Ascending aorta (tissue), 2 donors: ENCODE measurements at regions of chr19 and their contacts with region 1.

Region 1: DNA sequence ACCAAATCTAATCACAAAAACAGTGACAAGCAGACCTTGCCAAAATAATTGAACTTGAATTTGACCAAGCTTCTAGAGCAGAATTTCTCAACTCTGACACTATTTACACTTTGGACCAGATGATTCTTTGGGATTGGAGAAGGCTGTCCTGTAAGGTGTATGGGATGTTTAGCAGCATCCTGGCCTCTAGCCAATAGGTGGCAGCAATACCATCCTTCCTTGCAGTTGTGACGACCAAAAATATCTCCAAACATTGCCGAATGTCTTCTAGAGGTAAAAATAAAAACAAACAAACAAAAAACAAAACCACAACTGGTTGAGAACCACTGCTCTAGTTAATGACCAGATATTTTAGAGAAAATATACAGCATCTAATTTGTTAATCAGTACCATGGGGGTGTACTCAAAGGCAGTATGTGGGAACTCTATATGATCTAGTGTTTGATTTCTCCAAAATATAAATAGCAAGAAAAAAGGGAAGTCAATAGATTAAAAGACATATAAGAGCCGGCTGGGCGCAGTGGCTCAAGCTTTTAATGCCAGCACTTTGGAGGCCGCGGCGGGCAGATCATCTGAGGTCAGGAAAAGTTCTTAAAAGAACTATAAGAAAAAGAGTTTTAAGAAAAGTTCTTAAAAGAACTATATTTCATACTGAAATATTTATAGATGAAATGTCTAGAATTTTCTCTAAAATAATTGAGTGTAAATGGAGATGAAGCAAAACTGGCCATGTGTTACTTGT is 60.9 kb upstream of the ZNF527 start:
- DNase-seq: no peak
- H3K4me3 ChIP-seq: no peak overlapping the region
- H3K27ac ChIP-seq: no peak overlapping the region
- H3K4me1 ChIP-seq: no peaks in the 10 kb centered on the region
- H3K27me3 ChIP-seq: no peaks in the 10 kb centered on the region
- CTCF ChIP-seq: no peak

Region 2: DNA sequence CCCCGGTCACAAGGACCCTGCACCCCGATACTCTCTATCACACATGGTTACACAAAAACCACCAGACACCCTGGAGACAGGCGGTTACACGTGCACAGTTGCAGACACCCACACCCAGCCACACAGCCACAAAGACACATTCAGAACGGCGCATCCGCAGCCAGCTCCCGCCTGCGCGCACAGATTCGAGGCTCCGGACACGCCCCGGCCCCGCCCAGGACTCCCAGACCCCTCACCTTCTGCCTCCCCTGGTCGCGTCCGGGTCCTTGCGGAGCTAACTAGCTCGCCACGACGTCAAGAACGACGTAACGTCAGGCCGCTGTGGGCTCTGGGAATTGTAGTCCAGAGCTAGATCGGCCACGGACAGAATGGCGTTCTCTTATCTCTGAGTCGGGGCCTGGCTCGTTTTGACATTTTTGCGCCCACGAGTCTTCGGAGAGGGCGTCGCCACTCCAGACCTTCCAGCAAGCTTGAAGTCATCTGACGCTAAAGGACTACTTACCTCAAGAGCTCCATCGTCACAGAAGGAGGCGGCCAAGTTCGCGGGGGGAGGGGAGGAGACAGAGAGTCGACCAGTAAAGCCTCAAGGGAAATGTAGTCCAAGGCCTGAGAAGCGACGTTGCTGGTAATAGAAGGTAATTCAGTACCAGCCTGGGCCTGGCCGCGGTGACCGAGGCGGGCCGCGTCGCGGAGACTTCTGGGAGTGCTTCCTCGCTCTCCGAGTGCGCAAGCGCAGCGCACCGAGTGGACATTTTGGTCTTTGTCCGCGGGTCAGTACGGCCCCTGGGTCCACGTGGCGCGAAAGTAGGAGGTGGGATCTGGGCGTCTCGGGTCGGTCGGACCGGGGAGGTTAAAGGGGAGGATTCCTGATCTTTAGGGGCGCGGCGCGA is 1095.4 kb before region 1 on chr19 and contains the starts of genes ZNF146 and ZNF565:
- intact Hi-C with region 1: loop called (anchors 10 kb)
- DNase-seq: peak; percentile 96 to 99
- H3K4me3 ChIP-seq: peak within 1 kb of the TSS; percentile 81
- H3K27ac ChIP-seq: peak within 1 kb of the TSS; percentile 92 to 96
- H3K4me1 ChIP-seq: peaks cover 0 to 12% of the 10 kb centered on the region in 2 donors
- H3K27me3 ChIP-seq: no peaks in the 10 kb centered on the region
- CTCF ChIP-seq: no peak
- total RNA-seq, gene ZNF146: 21.2 TPM
- total RNA-seq, gene ZNF565: 1.9 TPM

Region 3: GRCh38 chr19:36915992-36916830 is 393.8 kb before region 1 on chr19 and contains the starts of genes ZNF568 and ZNF829:
- intact Hi-C with region 1: loop called (anchors 10 kb)
- DNase-seq: peak; percentile 42 to 93
- H3K4me3 ChIP-seq: peak within 1 kb of the TSS; percentile 80 to 91
- H3K27ac ChIP-seq: peak within 1 kb of the TSS; percentile 93 to 98
- H3K4me1 ChIP-seq: peaks cover 0 to 10% of the 10 kb centered on the region in 2 donors
- H3K27me3 ChIP-seq: no peaks in the 10 kb centered on the region
- CTCF ChIP-seq: peak; percentile 57 to 73 (median 59)
- total RNA-seq, gene ZNF568: 2.4 TPM
- total RNA-seq, gene ZNF829: 1.2 TPM

Region 4: DNA sequence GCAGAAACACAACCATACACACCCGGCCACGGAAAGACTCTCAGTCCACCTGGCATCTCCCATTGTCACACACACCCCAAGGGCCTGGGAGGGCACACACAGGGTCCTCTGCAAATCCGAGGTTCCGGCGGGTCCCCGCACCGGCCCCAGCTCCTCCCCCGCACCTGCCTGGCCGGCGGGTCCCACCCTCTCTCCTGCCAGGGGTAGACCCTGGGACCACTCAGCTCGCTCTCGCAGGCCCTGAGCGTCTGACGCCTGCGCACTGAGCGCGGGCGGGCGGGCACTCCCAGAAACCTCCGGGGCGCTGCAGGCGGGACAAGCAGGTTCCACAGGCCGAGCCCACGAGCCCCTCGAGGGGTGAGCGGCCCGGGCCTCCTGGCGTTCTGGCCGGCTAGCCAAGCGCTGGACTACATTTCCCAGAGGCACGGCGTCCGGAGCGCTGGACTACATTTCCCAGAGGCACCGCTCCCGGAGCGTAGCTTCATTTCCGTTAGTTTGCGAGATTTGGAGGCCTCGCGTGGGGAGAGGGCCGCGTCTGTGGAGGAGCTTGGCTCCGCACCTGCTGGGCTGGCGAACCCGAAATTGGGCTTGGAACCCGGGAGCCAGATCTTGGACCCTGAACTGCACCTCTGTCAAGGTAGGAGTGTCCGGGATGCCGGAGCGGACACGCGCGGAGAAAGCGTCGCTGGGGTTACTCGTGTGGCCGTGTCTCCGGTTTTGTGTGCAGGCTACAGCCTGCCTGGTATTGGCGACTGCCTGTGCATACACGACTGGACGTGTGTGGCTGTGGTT is 231.9 kb before region 1 on chr19 and contains the start of gene ZNF420:
- intact Hi-C with region 1: loop called (anchors 10 kb)
- DNase-seq: peak; percentile 77 to 96
- H3K4me3 ChIP-seq: peak within 1 kb of the TSS; percentile 84 to 87
- H3K27ac ChIP-seq: peak within 1 kb of the TSS; percentile 87 to 91
- H3K4me1 ChIP-seq: peaks cover 6 to 7% of the 10 kb centered on the region in 2 donors
- H3K27me3 ChIP-seq: no peaks in the 10 kb centered on the region
- CTCF ChIP-seq: no peak
- total RNA-seq, gene ZNF420: 69.9 TPM

Region 5: GRCh38 chr19:37217855-37218591 is 92.0 kb before region 1 on chr19 and contains the start of gene ZNF383:
- intact Hi-C with region 1: loop called (anchors 10 kb)
- DNase-seq: peak; percentile 47 to 91
- H3K4me3 ChIP-seq: peak within 1 kb of the TSS; percentile 60 to 73
- H3K27ac ChIP-seq: peak within 1 kb of the TSS; percentile 75 to 80
- H3K4me1 ChIP-seq: peaks cover 0 to 4% of the 10 kb centered on the region in 2 donors
- H3K27me3 ChIP-seq: no peaks in the 10 kb centered on the region
- CTCF ChIP-seq: no peak
- total RNA-seq, gene ZNF383: 6.9 TPM

Region 6: GRCh38 chr19:37342753-37343152 is 32.7 kb after region 1 on chr19:
- intact Hi-C with region 1: no loop called
- DNase-seq: no peak
- H3K4me3 ChIP-seq: no peak overlapping the region
- H3K27ac ChIP-seq: no peak overlapping the region
- H3K4me1 ChIP-seq: no peaks in the 10 kb centered on the region
- H3K27me3 ChIP-seq: no peaks in the 10 kb centered on the region
- CTCF ChIP-seq: no peak

Region 7: GRCh38 chr19:37506387-37507166 is 196.6 kb after region 1 on chr19 and contains the start of gene ZNF793:
- intact Hi-C with region 1: loop called (anchors 10 kb)
- DNase-seq: peak; percentile 34 to 89
- H3K4me3 ChIP-seq: peak within 1 kb of the TSS; percentile 75 to 88
- H3K27ac ChIP-seq: peak within 1 kb of the TSS; percentile 82 to 98
- H3K4me1 ChIP-seq: peaks cover 0 to 4% of the 10 kb centered on the region in 2 donors
- H3K27me3 ChIP-seq: no peaks in the 10 kb centered on the region
- CTCF ChIP-seq: no peak
- total RNA-seq, gene ZNF793: 3.6 TPM

Region 8: DNA sequence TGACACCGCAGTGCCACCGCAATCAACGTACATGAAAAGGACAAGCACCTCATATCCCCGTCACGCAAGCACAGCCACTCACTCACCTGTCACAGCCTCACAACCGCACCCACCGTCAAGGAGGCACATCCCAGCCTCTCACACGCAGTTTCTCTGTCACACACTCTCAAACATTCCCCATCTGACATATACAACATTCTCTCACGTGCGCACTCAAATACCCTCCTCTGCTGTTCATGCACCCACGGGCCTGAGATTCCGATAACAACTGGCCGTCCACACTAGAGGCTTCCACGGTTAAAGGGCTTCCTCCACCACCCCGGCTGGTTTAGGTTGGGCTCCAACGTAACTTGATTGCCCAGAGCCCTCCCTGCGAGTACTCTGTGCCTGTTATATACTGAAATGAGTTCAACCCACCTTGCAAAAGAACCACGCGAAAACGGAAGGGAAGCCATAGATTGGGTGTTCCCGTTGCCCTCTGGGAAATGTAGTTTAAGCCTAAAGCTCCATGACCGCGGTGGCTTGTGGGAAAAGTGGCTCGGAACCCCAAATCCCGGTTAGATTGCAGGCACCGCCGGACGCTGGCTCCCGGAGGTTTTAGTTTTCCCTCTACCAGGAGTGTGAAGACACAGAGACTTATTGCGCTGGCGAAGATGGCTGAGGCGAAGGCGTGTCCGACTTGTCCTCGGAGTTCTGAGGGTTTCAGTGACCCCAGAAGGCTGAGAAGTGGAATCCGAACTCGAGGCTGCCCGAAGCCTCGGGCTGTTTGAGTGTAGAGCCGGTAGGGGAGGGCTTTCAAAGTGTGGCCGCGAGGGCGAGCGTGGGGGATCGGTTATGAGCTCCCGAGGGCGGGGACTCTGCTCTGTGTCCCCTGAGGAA is 469.4 kb after region 1 on chr19 and contains the start of gene ZNF573:
- intact Hi-C with region 1: loop called (anchors 10 kb)
- DNase-seq: peak; percentile 35 to 90
- H3K4me3 ChIP-seq: peak within 1 kb of the TSS; percentile 81 to 83
- H3K27ac ChIP-seq: peak within 1 kb of the TSS; percentile 79 to 82
- H3K4me1 ChIP-seq: peaks cover 0 to 5% of the 10 kb centered on the region in 2 donors
- H3K27me3 ChIP-seq: no peaks in the 10 kb centered on the region
- CTCF ChIP-seq: peak in 2 of 3 experiments; percentile 25 to 32
- total RNA-seq, gene ZNF573: 2.2 TPM